ENCODE measurements at regions of chr19 and their contacts with region 1.

Region 1: DNA sequence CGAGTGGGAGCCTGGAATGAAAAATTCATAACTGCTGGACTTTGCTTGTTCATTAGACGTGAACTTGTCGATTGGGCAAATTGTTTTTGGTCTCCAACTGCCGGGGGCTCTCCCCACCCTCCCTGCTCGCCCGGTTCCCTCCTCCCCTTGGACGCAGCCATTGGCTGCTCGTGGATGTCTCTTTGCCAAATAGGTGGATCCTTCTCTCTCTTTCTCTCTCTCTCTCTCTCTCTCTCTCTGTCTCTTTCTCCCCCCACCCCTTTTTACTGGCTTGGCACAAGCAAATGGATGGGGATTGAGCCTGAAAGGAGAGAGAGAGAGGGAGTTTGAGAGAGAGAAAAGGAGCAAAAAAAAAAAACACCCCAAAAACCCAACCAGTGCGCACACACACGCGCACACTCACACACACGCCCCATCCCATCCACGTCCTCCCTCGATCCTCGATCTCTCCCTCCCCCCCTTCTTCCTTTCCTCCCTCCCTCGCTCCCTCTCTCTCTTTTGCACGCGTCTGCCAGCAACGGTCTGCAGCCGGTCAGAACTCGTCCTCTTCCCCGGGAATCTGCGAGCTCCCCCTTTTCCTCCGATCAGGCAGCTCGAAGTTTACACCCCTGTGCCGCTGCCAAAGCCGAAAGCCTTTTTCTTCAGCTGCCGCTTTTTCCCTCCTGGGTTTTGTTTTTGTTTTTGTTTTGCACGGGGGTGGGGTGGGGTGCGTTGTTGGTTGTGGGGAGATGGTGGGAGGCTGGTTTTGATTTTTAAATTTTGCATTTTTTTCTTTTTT is 27.8 kb downstream of the NFIX start:
- DNase-seq: peak; percentile 95

Region 2: DNA sequence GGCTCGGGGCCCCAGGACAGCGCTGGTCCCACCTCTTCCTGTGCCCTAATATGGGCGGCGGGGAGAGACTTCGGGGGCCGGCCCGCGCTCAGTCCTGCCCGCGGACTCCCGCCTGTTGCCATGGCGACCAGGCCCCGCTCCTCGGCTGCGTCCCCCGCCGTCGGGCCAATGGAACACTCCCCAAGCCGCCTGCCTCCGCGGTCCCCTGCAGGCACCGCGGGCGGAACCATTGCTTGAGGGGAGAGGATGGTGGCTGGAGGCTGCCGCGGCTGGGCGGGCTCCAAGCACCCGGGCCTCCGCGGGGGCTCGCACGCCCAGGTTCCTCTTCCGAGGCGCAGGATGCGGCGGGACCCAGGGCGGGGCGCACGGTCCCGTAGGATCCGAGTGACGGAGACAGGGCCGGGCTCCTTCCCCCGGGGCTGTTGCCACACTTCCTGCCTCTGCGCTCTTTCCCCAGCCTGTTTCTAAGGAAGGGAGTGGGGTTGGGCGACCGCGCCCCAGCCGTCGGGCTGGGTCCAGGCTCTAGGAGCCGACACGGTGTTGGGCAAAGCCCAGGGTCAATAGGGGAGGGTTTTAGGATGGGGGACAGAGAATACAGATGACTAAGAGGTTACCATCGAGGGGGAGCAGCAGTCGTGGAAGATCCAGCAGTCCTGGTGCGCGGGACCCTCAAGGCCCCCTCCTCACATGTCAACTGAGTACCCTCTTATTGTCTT is 233.0 kb before region 1 on chr19:
- intact Hi-C with region 1: loop called in 1 of 2 experiments (anchors 5 kb)
- DNase-seq: peak; percentile 100

Region 3: GRCh38 chr19:13036366-13036976 is 13.4 kb after region 1 on chr19:
- intact Hi-C with region 1: no loop called
- DNase-seq: peak; percentile 87

Region 4: DNA sequence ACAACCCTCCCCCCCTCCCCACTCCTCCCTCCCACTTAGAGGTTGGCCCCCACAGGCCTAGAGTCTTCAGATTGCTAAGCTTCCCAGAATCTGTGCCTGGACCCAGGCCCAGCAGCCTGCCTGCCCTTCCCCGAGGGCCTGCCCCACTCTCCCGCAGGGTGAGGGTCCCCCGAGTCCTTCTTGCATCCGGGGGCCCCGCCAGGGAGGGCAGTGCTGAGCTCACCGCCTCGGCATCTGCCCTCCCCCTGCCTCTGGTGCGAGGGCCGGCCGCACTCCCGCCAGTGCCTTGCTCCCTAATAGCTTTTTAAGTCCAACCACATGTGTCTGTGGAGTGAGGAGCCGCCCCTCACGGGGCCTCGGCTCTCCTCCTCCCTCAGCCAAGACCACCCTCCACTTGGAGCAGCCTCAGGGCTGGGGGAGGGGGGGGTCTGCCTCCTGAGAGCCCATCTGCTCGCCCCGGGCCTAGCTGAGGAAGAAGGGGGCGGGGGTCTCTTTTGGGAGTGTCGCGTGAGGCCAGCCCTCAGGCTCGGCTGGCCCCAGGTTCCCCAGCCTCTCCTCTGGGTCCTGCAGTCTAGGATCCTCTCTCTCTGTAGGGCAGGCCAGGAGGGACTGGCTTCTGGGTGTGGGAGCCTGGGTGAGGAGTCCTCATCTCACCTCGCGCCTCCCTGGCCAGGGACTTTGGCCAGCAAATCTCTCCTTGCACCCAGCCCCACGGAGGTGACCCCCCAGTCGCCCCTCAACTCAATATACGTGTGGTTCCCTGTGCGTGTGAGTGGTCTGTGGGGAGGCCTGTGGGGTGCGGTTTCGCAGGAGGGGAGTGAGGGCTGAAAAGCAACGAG is 32.4 kb after region 1 on chr19:
- intact Hi-C with region 1: loop called in 1 of 2 experiments (anchors 5 kb)
- DNase-seq: peak; percentile 96